CD4-positive, alpha-beta memory T cell (primary cell): ENCODE measurements at regions of chr7 and their contacts with region 1.

Region 1: GRCh38 chr7:155598810-155599210 is 45.7 kb upstream of the RBM33 start:
- DNase-seq: peak; percentile 64 to 70 (median 64)
- H3K4me3 ChIP-seq: no peak overlapping the region
- H3K4me3 Mint-ChIP-seq: no peak overlapping the region
- H3K27ac ChIP-seq: no peak overlapping the region
- H3K27ac Mint-ChIP-seq: peak overlapping the region in 1 of 7 donors; percentile 35
- H3K4me1 ChIP-seq: no peaks in the 10 kb centered on the region
- H3K4me1 Mint-ChIP-seq: peaks cover 0 to 5% (median 3%) of the 10 kb centered on the region in 4 donors
- H3K27me3 ChIP-seq: no peaks in the 10 kb centered on the region
- H3K27me3 Mint-ChIP-seq: peaks cover 27 to 28% of the 10 kb centered on the region in 2 donors

Region 2: DNA sequence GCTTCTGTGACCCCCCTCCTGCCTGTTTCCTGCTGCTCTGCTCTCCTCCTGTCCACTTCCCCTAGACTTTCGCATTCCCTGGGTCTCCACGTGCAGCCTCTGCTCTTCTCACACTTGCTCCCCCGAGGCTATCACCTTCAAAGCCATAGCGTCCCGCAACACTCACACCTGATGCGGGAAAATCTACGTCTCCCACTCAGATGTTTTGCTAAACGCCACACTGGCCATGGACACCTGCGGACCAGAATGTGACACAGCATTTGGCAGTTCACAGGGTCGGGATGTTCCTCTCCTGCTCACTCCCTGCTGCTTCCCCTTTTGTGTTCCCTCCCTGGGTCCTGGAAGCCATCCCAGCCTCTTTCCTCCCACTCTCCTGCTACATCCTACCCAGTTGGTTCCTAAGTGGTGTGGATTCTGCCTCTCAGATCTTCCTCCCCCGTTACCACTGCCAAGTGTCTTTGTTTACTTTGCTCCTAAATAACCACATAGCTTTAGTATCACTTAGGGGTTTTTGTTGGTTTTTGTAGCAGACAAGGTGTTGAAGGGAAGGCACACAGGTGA is 11.9 kb after region 1 on chr7:
- CTCF ChIA-PET with region 1: interaction called, 25 read pairs
- POLR2A ChIA-PET with region 1: no interaction called
- intact Hi-C with region 1: no loop called
- DNase-seq: no peak
- H3K4me3 ChIP-seq: no peak overlapping the region
- H3K4me3 Mint-ChIP-seq: no peak overlapping the region
- H3K27ac ChIP-seq: no peak overlapping the region
- H3K27ac Mint-ChIP-seq: no peak overlapping the region
- H3K4me1 ChIP-seq: no peaks in the 10 kb centered on the region
- H3K4me1 Mint-ChIP-seq: peaks cover 0 to 1% (median 0%) of the 10 kb centered on the region in 4 donors
- H3K27me3 ChIP-seq: no peaks in the 10 kb centered on the region
- H3K27me3 Mint-ChIP-seq: peaks cover 6 to 10% of the 10 kb centered on the region in 2 donors

Region 3: DNA sequence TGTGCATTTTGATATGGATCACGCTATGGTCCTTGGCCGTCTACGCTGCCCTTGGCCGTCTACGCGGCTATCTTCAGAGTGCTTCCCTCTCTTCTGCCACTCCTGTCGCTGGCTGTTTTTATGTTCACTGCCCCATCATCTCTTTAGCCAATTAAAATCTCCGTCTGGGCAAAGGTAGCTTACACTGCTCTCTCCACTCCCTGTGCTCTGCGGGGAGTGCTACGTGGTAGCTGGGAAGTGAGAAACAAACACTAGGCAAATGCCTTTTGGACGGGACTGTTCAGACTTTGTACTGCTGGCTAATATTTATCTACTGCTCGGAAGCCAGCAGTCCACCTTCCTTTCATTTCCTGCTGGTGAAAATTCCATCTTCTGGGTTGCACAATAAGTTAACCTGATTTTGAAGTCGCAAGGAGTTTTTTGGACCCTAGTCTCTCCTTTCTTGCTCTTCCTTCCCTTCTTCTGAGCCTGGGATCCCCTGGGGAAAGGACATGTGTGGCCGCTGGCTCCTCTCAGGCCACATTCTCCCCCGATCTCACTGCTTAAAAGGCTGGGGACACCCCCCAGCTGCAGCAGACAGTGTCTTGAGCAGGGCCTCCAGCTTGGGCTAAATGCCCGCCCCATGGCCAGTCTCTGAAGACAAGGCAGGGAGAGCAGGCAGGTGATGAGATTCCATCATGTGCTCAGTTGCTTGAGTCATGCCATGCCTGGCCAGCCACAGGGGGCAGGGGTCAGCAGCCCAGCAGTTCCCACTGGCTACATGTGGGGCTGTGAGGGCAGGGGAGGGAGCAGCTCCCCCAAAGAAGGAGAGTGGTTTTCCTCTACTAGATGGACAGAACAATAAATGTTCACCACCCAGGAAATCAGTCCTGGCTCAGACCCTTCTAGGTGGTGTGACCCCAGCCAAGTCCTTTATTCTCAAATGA is 20.2 kb after region 1 on chr7:
- CTCF ChIA-PET with region 1: interaction called, 10 read pairs
- POLR2A ChIA-PET with region 1: no interaction called
- intact Hi-C with region 1: no loop called
- DNase-seq: no peak
- H3K4me3 ChIP-seq: no peak overlapping the region
- H3K4me3 Mint-ChIP-seq: no peak overlapping the region
- H3K27ac ChIP-seq: no peak overlapping the region
- H3K27ac Mint-ChIP-seq: no peak overlapping the region
- H3K4me1 ChIP-seq: no peaks in the 10 kb centered on the region
- H3K4me1 Mint-ChIP-seq: no peaks in the 10 kb centered on the region
- H3K27me3 ChIP-seq: no peaks in the 10 kb centered on the region
- H3K27me3 Mint-ChIP-seq: peaks cover 0 to 11% of the 10 kb centered on the region in 2 donors

Region 4: GRCh38 chr7:155724327-155725005 is 125.7 kb after region 1 on chr7:
- CTCF ChIA-PET with region 1: interaction called, 10 read pairs
- POLR2A ChIA-PET with region 1: no interaction called
- intact Hi-C with region 1: no loop called
- DNase-seq: no peak
- H3K4me3 ChIP-seq: no peak overlapping the region
- H3K4me3 Mint-ChIP-seq: no peak overlapping the region
- H3K27ac ChIP-seq: no peak overlapping the region
- H3K27ac Mint-ChIP-seq: peak overlapping the region in 2 of 7 donors; percentile 8 to 68
- H3K4me1 ChIP-seq: no peaks in the 10 kb centered on the region
- H3K4me1 Mint-ChIP-seq: peaks cover 15 to 45% (median 22%) of the 10 kb centered on the region in 4 donors
- H3K27me3 ChIP-seq: no peaks in the 10 kb centered on the region
- H3K27me3 Mint-ChIP-seq: no peaks in the 10 kb centered on the region

Region 5: DNA sequence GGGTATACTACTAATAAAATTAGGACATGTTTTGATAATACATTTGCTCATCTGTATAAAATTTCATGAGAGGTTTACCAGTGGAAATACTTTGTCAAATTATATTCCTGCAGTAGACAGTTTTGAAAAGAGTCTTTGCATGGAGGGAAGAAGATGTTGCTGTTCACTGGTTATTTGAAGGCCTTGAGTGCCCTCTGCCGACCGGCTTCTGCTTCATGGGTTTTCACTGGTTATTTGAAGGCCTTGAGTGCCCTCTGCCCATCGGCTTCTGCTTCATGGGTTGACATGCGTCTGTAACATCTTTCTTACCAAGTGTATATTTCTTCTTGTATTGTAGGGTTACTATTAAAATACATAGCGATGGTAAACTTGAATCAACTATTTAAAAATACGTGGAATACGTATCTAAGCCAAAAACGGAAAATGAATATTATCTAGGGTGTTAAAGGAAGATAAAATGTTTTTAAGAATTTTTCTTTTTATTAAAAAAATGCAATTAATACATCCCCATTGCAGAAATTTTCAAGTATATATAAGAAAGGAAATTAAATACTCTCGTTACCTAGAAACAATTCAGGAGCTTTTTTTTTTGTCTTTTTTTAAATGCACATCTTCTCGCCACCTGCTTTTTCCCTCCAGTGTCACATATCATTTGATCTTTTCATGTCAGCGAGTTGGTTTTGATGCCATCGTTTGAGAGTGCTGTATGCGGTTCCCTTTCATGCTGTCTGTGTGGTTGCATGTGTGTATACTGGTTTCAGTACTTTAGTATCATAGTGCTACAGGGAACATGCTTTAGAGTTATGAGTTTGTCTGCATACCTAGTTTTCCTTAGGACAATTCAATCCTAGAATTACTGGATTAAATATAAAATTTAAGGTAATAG is 140.1 kb after region 1 on chr7:
- CTCF ChIA-PET with region 1: interaction called, 32 read pairs
- POLR2A ChIA-PET with region 1: no interaction called
- intact Hi-C with region 1: loop called (anchors 1 kb)
- DNase-seq: peak; percentile 42 to 61 (median 51)
- H3K4me3 ChIP-seq: no peak overlapping the region
- H3K4me3 Mint-ChIP-seq: peak overlapping the region in 6 of 8 donors; percentile 21 to 50 (median 38)
- H3K27ac ChIP-seq: no peak overlapping the region
- H3K27ac Mint-ChIP-seq: peak overlapping the region; percentile 22 to 90 (median 39)
- H3K4me1 ChIP-seq: peaks cover 12% of the 10 kb centered on the region
- H3K4me1 Mint-ChIP-seq: peaks cover 14 to 75% (median 34%) of the 10 kb centered on the region in 4 donors
- H3K27me3 ChIP-seq: no peaks in the 10 kb centered on the region
- H3K27me3 Mint-ChIP-seq: no peaks in the 10 kb centered on the region

Region 6: GRCh38 chr7:155763691-155764437 is 165.1 kb after region 1 on chr7:
- CTCF ChIA-PET with region 1: interaction called, 214 read pairs
- POLR2A ChIA-PET with region 1: interaction called, 3 read pairs
- intact Hi-C with region 1: loop called (anchors 1 kb)
- DNase-seq: peak; percentile 40 to 68 (median 60)
- H3K4me3 ChIP-seq: peak overlapping the region in 1 of 2 donors; percentile 11
- H3K4me3 Mint-ChIP-seq: peak overlapping the region; percentile 67 to 91 (median 77)
- H3K27ac ChIP-seq: peak overlapping the region; percentile 51
- H3K27ac Mint-ChIP-seq: peak overlapping the region; percentile 87 to 96 (median 93)
- H3K4me1 ChIP-seq: peaks cover 36% of the 10 kb centered on the region
- H3K4me1 Mint-ChIP-seq: peaks cover 33 to 66% (median 48%) of the 10 kb centered on the region in 4 donors
- H3K27me3 ChIP-seq: no peaks in the 10 kb centered on the region
- H3K27me3 Mint-ChIP-seq: no peaks in the 10 kb centered on the region

Region 7: DNA sequence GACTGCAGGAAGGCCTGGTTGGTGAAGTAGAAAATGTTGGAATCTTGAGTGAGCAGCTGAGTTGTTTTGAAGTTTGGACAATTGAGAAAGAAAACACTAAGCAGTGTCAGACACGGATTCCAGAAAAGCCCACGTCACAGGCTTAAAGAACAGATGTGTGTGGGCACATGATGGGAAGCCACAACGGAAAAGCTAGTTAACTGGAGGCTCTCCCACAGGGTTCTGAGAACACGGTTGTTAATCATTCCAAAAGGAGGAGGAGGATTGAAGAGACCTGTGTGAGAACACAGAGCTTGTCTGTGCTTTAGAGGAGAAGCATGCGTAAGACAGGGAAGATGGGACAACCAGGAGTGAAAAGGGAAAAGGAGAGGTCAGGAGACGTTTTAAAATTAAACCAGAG is 170.9 kb after region 1 on chr7:
- CTCF ChIA-PET with region 1: interaction called, 214 read pairs
- POLR2A ChIA-PET with region 1: interaction called, 3 read pairs
- intact Hi-C with region 1: loop called (anchors 1 kb)
- DNase-seq: no peak
- H3K4me3 ChIP-seq: no peak overlapping the region
- H3K4me3 Mint-ChIP-seq: no peak overlapping the region
- H3K27ac ChIP-seq: no peak overlapping the region
- H3K27ac Mint-ChIP-seq: no peak overlapping the region
- H3K4me1 ChIP-seq: peaks cover 7% of the 10 kb centered on the region
- H3K4me1 Mint-ChIP-seq: peaks cover 6 to 14% (median 9%) of the 10 kb centered on the region in 4 donors
- H3K27me3 ChIP-seq: no peaks in the 10 kb centered on the region
- H3K27me3 Mint-ChIP-seq: no peaks in the 10 kb centered on the region